Cardiac septum (tissue), 1 donor: ENCODE measurements at regions of chr2 and their contacts with region 1.

Region 1: GRCh38 chr2:172710584-172711024 is 25.0 kb upstream of the RAPGEF4 start:
- DNase-seq: no peak

Region 2: DNA sequence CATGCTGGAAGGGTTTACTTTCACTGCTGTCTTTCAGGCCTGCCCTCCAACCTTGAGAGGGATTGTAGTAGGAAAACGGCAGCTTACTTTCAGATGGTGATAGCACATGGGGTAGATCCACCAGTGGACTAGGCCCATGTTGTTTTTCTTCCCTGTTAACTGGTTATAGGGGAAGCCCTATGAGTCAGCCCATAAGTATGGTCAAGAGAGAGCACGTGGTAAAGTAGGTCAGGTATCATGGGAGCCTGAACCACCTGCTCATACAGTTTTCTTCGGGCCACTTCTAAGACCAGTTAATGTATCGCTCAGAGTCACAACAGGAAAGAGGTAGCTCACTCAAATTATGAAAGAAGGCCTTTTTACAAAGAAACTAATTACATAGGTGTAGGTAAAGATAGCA is 121.7 kb before region 1 on chr2:
- intact Hi-C with region 1: loop called (anchors 5 kb)
- DNase-seq: no peak

Region 3: GRCh38 chr2:172613615-172614231 is 96.9 kb before region 1 on chr2:
- intact Hi-C with region 1: no loop called
- DNase-seq: no peak

Region 4: DNA sequence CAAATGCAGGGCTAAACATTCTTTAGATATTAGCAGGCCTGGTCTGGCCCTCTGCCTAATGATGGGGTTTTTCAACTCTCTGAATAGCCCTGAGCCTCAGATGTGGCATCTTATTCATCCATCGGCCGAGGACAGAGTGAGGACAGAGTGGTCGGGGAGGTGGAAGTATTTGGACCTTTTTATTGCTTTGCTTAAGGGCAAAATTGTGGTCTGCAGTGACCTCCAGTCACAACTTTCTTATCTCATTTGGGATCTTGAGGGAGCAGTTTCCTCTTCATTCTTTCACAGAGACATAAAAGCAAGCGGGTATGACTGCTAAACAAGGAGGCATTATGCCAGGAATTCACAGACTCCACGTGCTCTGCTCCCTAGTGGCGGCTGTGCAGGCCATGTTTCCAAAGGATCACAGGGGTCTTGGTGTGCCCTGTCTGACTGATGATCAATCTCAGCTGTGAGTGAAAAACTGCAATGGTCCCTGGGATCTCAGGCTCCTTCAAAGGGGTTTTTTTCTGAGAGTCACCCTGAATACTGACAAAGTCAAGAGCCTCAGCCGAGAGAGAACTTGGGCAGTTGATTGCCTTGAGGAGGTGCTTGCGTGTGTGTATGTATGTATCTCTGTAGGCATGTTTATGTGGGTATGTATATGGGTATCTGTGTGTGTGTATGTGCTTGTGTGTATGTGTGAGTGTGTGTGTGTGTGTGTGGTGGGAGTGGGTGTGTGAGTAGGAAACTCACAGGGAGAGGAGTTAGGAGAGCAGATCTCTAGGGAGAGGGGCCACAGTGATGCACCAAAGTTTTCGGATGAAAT is 72.7 kb after region 1 on chr2:
- intact Hi-C with region 1: loop called (anchors 5 kb)
- DNase-seq: no peak